Activated naive CD4-positive, alpha-beta T cell treated with anti-CD3 and anti-CD28 coated beads for 36 hours (primary cell): ENCODE measurements at regions of chr13 and their contacts with region 1.

Region 1: GRCh38 chr13:110915057-110915873 is at the start of gene ANKRD10:
- DNase-seq: peak; percentile 97
- H3K4me3 Mint-ChIP-seq: peak within 1 kb of the TSS; percentile 85
- H3K27ac Mint-ChIP-seq: peak within 1 kb of the TSS; percentile 93
- H3K4me1 Mint-ChIP-seq: peaks cover 43% of the 10 kb centered on the region
- H3K27me3 Mint-ChIP-seq: no peaks in the 10 kb centered on the region
- total RNA-seq, gene ANKRD10: 79.8 to 82.5 TPM

Region 2: GRCh38 chr13:110812121-110812868 is 103.0 kb before region 1 on chr13:
- CTCF ChIA-PET with region 1: no interaction called
- intact Hi-C with region 1: no loop called
- DNase-seq: no peak
- H3K4me3 Mint-ChIP-seq: peak overlapping the region; percentile 51
- H3K27ac Mint-ChIP-seq: no peak overlapping the region
- H3K4me1 Mint-ChIP-seq: peaks cover 12% of the 10 kb centered on the region
- H3K27me3 Mint-ChIP-seq: peaks cover 35% of the 10 kb centered on the region

Region 3: DNA sequence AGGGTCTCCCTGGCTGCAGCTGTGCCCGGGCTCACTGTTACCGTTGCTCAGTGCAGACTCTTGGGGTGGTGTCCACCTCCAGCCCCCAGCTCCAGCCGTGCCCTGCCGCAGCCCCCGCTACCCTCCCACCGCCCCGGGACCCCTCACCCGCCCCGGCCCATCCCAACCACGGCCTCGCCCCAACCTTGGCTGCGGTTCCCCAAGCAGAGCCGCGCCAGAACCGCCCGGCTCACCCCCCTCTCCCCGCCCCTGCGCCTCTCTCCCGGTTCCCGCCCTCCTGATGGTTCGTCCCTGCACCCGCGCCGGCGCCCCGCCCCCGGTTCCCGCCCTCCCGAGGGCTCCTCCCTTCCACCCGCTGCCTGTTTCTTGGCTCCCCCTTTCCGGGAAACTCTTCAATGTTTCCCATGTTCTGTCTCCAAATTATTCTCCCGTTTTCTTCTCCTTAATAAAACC is 40.7 kb before region 1 on chr13:
- CTCF ChIA-PET with region 1: no interaction called
- intact Hi-C with region 1: loop called (anchors 2 kb)
- DNase-seq: peak; percentile 78
- H3K4me3 Mint-ChIP-seq: peak overlapping the region; percentile 74
- H3K27ac Mint-ChIP-seq: peak overlapping the region; percentile 65
- H3K4me1 Mint-ChIP-seq: peaks cover 7% of the 10 kb centered on the region
- H3K27me3 Mint-ChIP-seq: peaks cover 16% of the 10 kb centered on the region

Region 4: GRCh38 chr13:110965038-110965754 is 49.9 kb after region 1 on chr13:
- CTCF ChIA-PET with region 1: no interaction called
- intact Hi-C with region 1: loop called (anchors 1 kb)
- DNase-seq: peak; percentile 56
- H3K4me3 Mint-ChIP-seq: no peak overlapping the region
- H3K27ac Mint-ChIP-seq: peak overlapping the region; percentile 75
- H3K4me1 Mint-ChIP-seq: peaks cover 16% of the 10 kb centered on the region
- H3K27me3 Mint-ChIP-seq: peaks cover 26% of the 10 kb centered on the region

Region 5: DNA sequence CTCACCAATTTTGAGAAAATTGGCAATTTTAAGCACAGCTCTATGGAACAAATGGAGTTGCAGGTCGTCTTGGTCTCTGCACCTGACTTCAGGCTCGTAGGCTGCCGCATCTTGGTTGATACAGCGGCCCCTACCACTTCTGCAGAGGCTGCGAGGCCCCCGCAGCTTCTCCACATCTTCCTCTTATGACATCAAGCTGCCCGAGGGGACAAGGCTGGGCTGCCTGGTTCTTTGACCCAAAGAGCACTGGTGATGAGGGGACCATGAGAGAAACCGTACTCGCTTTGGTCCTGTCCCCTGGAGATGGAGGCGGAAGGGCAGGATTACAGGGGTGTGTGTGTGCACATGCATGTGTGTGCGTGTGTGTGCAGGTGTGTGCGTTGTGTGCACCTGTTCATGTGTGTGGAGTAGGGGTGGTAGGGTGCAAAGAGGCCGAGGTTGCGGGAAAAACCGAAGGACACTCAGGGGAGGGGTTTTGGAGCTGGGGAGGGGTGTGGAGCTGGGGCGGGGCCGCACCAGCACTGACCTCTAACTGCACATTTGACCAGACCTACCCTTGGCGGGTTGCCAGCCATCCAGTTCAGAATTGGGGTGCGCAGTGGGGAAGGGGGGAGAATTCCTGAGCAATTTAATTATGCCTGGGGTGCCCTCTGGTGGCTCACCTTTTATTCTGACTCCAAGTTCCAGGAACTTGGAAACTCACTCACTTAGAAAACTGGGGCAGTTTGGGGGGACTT is 134.7 kb after region 1 on chr13:
- CTCF ChIA-PET with region 1: interaction called, 3 read pairs
- intact Hi-C with region 1: loop called (anchors 1 kb)
- DNase-seq: peak; percentile 21
- H3K4me3 Mint-ChIP-seq: no peak overlapping the region
- H3K27ac Mint-ChIP-seq: no peak overlapping the region
- H3K4me1 Mint-ChIP-seq: no peaks in the 10 kb centered on the region
- H3K27me3 Mint-ChIP-seq: peaks cover 7% of the 10 kb centered on the region

Region 6: GRCh38 chr13:111184458-111185401 is 269.5 kb after region 1 on chr13:
- CTCF ChIA-PET with region 1: interaction called, 3 read pairs
- intact Hi-C with region 1: loop called (anchors 10 kb)
- DNase-seq: peak; percentile 67
- H3K4me3 Mint-ChIP-seq: peak overlapping the region; percentile 58
- H3K27ac Mint-ChIP-seq: peak overlapping the region; percentile 86
- H3K4me1 Mint-ChIP-seq: peaks cover 94% of the 10 kb centered on the region
- H3K27me3 Mint-ChIP-seq: no peaks in the 10 kb centered on the region

Region 7: DNA sequence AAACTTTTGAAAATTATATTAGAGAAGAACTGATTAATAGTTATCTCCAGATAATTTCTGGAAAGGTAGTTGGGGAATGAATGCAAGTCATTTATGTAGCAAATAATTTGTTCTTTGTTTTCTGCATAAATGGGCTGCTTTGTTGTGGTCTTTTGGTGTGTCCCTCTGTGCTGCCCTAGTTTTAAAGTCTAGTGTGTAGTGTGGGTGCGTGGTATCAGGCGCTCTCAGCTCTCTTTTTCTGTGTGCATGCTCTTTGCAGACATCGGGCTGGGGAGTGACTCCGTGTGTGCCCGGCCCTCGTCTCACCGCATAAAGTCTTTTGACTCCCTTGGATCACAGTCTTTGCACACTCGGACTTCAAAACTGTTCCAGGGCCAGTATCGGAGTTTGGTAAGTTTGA is 294.3 kb after region 1 on chr13:
- CTCF ChIA-PET with region 1: no interaction called
- intact Hi-C with region 1: no loop called
- DNase-seq: no peak
- H3K4me3 Mint-ChIP-seq: no peak overlapping the region
- H3K27ac Mint-ChIP-seq: no peak overlapping the region
- H3K4me1 Mint-ChIP-seq: peaks cover 31% of the 10 kb centered on the region
- H3K27me3 Mint-ChIP-seq: no peaks in the 10 kb centered on the region

Region 8: GRCh38 chr13:112587212-112587763 is 1672.0 kb after region 1 on chr13:
- CTCF ChIA-PET with region 1: no interaction called
- intact Hi-C with region 1: loop called (anchors 10 kb)
- DNase-seq: peak; percentile 78
- H3K4me3 Mint-ChIP-seq: peak overlapping the region; percentile 96
- H3K27ac Mint-ChIP-seq: peak overlapping the region; percentile 93
- H3K4me1 Mint-ChIP-seq: peaks cover 47% of the 10 kb centered on the region
- H3K27me3 Mint-ChIP-seq: no peaks in the 10 kb centered on the region